ENCODE measurements at regions of chr15 and their contacts with region 1.

Region 1: GRCh38 chr15:99704444-99704838 is 28.8 kb downstream of the LYSMD4 start:
- DNase-seq: peak; percentile 90
- ATAC-seq: peak; percentile 58
- H3K4me3 ChIP-seq: no peak overlapping the region
- H3K27ac ChIP-seq: no peak overlapping the region
- H3K4me1 ChIP-seq: peaks cover 15% of the 10 kb centered on the region
- H3K27me3 ChIP-seq: no peaks in the 10 kb centered on the region
- CTCF ChIP-seq: peak; percentile 78
- POLR2A ChIP-seq: no peak; the same call in 1 of the 2 replicates
- RAD21 ChIP-seq: peak; percentile 80

Region 2: DNA sequence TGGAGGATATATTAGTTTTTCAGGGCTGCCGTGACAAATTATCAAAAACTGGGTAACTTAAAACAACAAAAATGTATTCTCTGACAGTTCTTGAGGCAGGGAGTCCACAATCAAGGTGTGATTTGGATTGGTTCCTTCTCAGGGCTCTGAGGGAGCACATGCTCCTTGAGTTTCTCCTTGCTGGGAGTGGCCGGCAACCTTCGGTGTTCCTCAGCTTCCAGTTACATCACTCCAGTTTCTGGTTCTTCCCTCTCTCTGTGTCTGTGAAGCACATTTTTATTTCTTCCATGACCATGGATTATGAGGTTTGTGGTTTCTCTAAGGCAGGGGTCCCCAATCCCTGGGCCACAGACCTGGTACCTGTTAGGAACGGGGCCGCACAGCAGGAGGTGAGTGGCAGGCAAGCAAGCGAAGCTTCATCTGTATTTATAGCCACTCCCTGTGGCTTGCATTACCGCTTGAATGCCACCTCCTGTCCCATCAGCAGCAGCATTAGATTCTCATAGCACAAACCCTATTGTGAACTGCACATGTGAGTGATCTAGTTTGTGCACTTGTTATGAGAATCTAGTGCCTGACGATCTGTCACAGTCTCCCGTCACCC is 428.8 kb before region 1 on chr15:
- CTCF ChIA-PET with region 1: interaction called, 34 read pairs
- POLR2A ChIA-PET with region 1: no interaction called
- dilution Hi-C with region 1: no loop called
- in situ Hi-C with region 1: loop called (anchors 5 kb)
- intact Hi-C with region 1: loop called (anchors 5 kb)
- DNase-seq: no peak
- ATAC-seq: no peak
- H3K4me3 ChIP-seq: no peak overlapping the region
- H3K27ac ChIP-seq: no peak overlapping the region
- H3K4me1 ChIP-seq: no peaks in the 10 kb centered on the region
- H3K27me3 ChIP-seq: no peaks in the 10 kb centered on the region
- CTCF ChIP-seq: no peak
- POLR2A ChIP-seq: no peak
- RAD21 ChIP-seq: no peak

Region 3: GRCh38 chr15:99296386-99296785 is 408.1 kb before region 1 on chr15:
- CTCF ChIA-PET with region 1: interaction called, 11 read pairs
- POLR2A ChIA-PET with region 1: interaction called, 3 read pairs
- dilution Hi-C with region 1: no loop called
- in situ Hi-C with region 1: no loop called
- intact Hi-C with region 1: no loop called
- DNase-seq: no peak
- ATAC-seq: peak; percentile 49
- H3K4me3 ChIP-seq: no peak overlapping the region
- H3K27ac ChIP-seq: no peak overlapping the region
- H3K4me1 ChIP-seq: peaks cover 3% of the 10 kb centered on the region; the same call in 1 of the 2 replicates
- H3K27me3 ChIP-seq: no peaks in the 10 kb centered on the region
- CTCF ChIP-seq: no peak
- POLR2A ChIP-seq: no peak
- RAD21 ChIP-seq: no peak

Region 4: GRCh38 chr15:99476413-99477222 is 227.8 kb before region 1 on chr15:
- CTCF ChIA-PET with region 1: interaction called, 5 read pairs
- POLR2A ChIA-PET with region 1: no interaction called
- dilution Hi-C with region 1: no loop called
- in situ Hi-C with region 1: no loop called
- intact Hi-C with region 1: loop called (anchors 1 kb)
- DNase-seq: peak; percentile 100
- ATAC-seq: peak; percentile 92
- H3K4me3 ChIP-seq: peak overlapping the region; percentile 5; the same call in 1 of the 2 replicates
- H3K27ac ChIP-seq: peak overlapping the region; percentile 92
- H3K4me1 ChIP-seq: peaks cover 24% of the 10 kb centered on the region
- H3K27me3 ChIP-seq: no peaks in the 10 kb centered on the region
- CTCF ChIP-seq: no peak
- POLR2A ChIP-seq: peak; percentile 47; the same call in 1 of the 2 replicates
- RAD21 ChIP-seq: peak; percentile 36; the same call in 1 of the 2 replicates

Region 5: GRCh38 chr15:99755692-99756409 is 51.4 kb after region 1 on chr15:
- CTCF ChIA-PET with region 1: interaction called, 3 read pairs
- POLR2A ChIA-PET with region 1: no interaction called
- dilution Hi-C with region 1: no loop called
- in situ Hi-C with region 1: no loop called
- intact Hi-C with region 1: loop called (anchors 2 kb)
- DNase-seq: peak; percentile 67
- ATAC-seq: peak; percentile 96
- H3K4me3 ChIP-seq: no peak overlapping the region
- H3K27ac ChIP-seq: no peak overlapping the region
- H3K4me1 ChIP-seq: no peaks in the 10 kb centered on the region
- H3K27me3 ChIP-seq: peaks cover 18% of the 10 kb centered on the region; the same call in 1 of the 2 replicates
- CTCF ChIP-seq: peak; percentile 86
- POLR2A ChIP-seq: no peak
- RAD21 ChIP-seq: peak; percentile 81

Region 6: GRCh38 chr15:99826157-99826780 is 121.8 kb after region 1 on chr15:
- CTCF ChIA-PET with region 1: no interaction called
- POLR2A ChIA-PET with region 1: no interaction called
- dilution Hi-C with region 1: no loop called
- in situ Hi-C with region 1: no loop called
- intact Hi-C with region 1: no loop called
- DNase-seq: no peak
- ATAC-seq: no peak
- H3K4me3 ChIP-seq: no peak overlapping the region
- H3K27ac ChIP-seq: no peak overlapping the region
- H3K4me1 ChIP-seq: no peaks in the 10 kb centered on the region
- H3K27me3 ChIP-seq: no peaks in the 10 kb centered on the region
- CTCF ChIP-seq: no peak
- POLR2A ChIP-seq: no peak
- RAD21 ChIP-seq: no peak

Region 7: DNA sequence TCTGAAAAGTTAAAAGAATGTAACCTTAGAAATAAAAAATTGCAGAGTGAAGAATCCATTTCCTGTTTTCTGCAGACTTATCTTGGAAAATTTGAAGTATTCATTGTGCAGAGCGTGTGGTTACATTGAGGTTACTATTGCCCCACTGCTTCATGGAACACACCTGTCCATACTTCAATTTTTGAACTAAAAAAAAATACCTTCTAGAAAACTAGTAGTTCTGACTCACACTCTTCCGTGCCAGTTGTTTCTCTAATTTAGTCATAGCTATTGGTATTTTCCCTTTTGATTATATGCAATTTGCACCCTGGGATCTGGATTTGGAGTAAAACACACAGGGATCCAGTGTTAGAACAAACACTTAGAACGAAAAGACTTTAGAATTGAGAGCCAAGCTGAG is 140.6 kb after region 1 on chr15:
- CTCF ChIA-PET with region 1: no interaction called
- POLR2A ChIA-PET with region 1: no interaction called
- dilution Hi-C with region 1: no loop called
- in situ Hi-C with region 1: no loop called
- intact Hi-C with region 1: no loop called
- DNase-seq: peak; percentile 1
- ATAC-seq: no peak
- H3K4me3 ChIP-seq: no peak overlapping the region
- H3K27ac ChIP-seq: no peak overlapping the region
- H3K4me1 ChIP-seq: no peaks in the 10 kb centered on the region
- H3K27me3 ChIP-seq: no peaks in the 10 kb centered on the region
- CTCF ChIP-seq: no peak
- POLR2A ChIP-seq: no peak
- RAD21 ChIP-seq: no peak

Measured in IMR-90 (cell line).